Activated naive CD4-positive, alpha-beta T cell treated with anti-CD3 and anti-CD28 coated beads for 36 hours (primary cell): ENCODE measurements at regions of chr5 and their contacts with region 1.

Region 1: DNA sequence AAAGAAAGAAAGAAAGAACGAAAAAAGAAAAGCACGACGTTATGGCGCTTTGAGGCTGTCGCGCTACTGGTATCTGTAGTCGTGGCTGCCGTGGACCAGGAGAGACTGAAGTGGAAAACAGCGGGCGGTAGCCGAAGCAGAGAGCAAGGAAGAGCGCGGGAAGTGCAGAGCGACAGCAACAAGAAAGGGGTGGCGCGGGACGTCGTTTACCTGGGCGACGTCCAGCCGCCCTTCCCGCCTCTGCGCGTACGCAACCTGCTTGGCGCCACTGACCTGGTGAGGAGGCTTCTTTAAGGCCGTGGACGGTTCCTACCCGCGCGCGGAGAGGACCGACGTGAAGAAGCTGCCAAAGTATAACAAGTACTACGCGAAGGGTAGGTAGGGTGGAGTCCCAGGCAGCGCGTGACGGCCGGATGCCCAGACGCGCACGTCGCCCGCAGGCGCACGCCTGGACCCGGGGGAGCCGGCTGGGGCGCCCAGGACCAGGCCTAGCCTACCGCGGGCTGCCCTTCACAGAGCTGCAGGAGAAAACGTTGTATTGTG is 15.4 kb downstream of the CCL28 start:
- DNase-seq: peak; percentile 75
- H3K4me3 Mint-ChIP-seq: peak overlapping the region; percentile 88
- H3K27ac Mint-ChIP-seq: peak overlapping the region; percentile 87
- H3K4me1 Mint-ChIP-seq: peaks cover 32% of the 10 kb centered on the region
- H3K27me3 Mint-ChIP-seq: no peaks in the 10 kb centered on the region

Region 2: GRCh38 chr5:43609752-43610151 is 212.9 kb after region 1 on chr5:
- CTCF ChIA-PET with region 1: no interaction called
- intact Hi-C with region 1: loop called (anchors 2 kb)
- DNase-seq: peak; percentile 13
- H3K4me3 Mint-ChIP-seq: no peak overlapping the region
- H3K27ac Mint-ChIP-seq: no peak overlapping the region
- H3K4me1 Mint-ChIP-seq: peaks cover 26% of the 10 kb centered on the region
- H3K27me3 Mint-ChIP-seq: no peaks in the 10 kb centered on the region